HEK293T (cell line): ENCODE measurements at regions of chr9 and their contacts with region 1.

Region 1: GRCh38 chr9:12554636-12555035 is 138.5 kb upstream of the TYRP1 start:
- DNase-seq: no peak

Region 2: GRCh38 chr9:12566404-12567090 is 11.9 kb after region 1 on chr9:
- CTCF ChIA-PET with region 1: no interaction called
- POLR2A ChIA-PET with region 1: no interaction called
- DNase-seq: no peak

Region 3: GRCh38 chr9:12640016-12640587 is 85.5 kb after region 1 on chr9:
- CTCF ChIA-PET with region 1: interaction called, 11 read pairs
- POLR2A ChIA-PET with region 1: no interaction called
- DNase-seq: peak; percentile 8